Common myeloid progenitor, CD34-positive (primary cell): ENCODE measurements at regions of chr2 and their contacts with region 1.

Region 1: DNA sequence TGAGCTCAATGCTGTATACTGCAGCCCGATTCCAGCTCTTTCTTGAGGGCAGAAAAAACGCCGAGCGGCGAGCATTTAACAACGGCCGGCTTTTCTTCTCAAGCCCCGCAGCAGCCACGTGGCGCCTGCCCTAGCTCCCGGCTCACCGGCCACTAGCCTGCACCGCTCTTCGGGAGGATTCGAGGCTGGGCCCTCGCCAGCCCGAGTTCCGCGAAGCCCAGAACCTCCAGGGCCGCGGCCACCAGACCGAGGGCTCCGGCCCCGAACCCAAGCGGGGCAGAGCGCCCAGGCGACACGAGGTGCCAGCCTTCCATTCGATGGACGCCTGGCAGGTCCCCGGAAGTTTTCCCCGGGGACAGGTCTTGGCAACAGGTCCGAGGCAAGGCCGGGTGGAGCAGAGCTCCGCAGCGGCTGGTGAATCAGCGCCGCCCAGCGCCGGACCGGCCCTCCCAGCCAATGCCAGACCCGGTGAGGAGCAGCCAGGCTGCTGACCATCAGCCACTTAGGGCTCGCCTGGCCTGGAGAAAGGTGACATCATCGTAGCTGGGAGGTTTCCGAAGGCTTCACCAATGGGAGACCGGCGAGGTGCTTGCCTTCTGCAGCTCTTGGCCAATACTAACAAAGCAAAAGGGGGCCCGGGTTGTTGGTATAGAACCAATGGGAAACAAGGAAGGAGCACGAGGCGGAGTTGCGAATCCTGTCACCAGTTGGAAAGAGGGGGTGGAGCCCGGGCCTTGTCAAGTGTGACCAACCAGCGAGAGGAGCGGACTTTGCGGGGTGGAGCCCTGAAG is 544 bp upstream of the MXD1 start:
- DNase-seq: peak; percentile 100
- H3K4me3 ChIP-seq: peak overlapping the region; percentile 42 to 87 (median 78)
- H3K27ac ChIP-seq: peak overlapping the region; percentile 72 to 90
- H3K4me1 ChIP-seq: peaks cover 6 to 49% (median 32%) of the 10 kb centered on the region in 4 experiments
- H3K27me3 ChIP-seq: no peaks in the 10 kb centered on the region

Region 2: DNA sequence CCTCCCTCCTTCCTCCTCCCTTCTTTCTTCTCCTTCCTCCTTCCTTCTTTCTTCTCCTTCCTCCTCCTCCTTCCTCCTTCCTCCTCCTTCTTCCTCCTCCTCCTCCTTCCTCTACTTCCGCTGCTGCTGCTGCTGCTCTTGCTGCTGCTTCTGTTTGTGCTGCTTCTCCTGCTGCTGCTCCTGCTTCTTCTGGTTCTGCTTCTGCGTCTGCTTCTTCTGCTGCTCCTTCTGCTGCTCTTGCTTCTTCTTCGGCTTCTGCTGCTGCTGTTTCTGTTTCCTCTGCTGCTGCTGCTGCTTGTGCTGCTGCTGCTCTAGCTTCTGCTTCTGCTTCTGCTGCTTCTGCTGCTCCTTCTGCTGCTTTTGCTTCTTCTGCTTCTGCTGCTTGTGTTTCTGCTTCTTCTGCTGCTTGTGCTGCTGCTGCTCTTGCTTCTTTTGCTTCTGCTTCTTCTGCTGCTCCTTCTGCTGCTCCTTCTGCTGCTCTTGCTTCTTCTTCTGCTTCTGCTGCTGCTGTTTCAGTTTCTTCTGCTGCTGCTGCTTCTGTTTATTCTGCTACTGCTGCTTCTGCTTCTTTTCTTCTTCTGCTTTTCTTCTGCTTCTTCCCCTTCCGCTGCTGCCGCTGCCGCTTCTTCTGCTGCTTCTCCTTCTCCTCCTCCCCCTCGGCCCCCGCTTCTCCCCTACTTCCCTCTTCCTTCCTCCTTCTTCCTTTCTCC is 12.0 kb before region 1 on chr2:
- CTCF ChIA-PET with region 1: interaction called, 10 read pairs
- POLR2A ChIA-PET with region 1: no interaction called
- DNase-seq: peak; percentile 31 to 84 (median 76)
- H3K4me3 ChIP-seq: peak overlapping the region in 6 of 7 experiments; percentile 6 to 77 (median 57)
- H3K27ac ChIP-seq: peak overlapping the region in 1 of 2 experiments; percentile 32
- H3K4me1 ChIP-seq: peaks cover 5 to 23% (median 16%) of the 10 kb centered on the region in 4 experiments
- H3K27me3 ChIP-seq: no peaks in the 10 kb centered on the region

Region 3: DNA sequence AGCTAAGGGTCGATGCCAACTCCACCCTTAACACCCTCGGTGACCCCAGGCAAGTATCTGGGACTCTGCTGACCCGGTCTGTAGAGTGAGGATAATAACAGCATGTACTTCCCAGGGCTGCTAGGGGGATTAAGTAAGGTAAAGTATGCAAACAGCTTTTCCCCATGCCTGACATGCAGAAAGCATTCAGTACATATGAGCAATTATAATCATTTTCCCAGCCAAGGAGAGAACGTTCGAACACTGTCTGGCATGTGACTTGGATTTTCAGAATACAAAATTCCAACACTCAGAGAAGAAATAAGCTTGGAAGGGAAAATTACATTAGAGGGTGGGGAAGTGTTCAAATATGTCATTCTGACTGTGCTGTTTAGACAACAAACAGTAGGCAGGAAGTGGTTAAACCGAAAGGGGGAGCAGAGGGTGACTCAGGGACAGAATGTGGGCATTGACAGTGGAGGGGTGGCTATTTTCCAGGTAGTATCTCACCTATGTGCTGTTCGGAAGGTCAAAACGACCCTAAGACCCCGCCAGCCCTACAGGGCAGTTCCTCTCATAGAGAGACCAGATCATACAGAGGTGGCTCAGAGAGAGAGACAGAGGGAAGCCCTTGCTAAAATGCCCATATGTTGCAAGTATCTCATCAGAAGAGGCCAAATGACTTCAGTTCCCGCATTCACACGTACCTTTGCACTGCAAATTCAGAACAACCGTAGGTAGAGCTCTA is 32.1 kb after region 1 on chr2:
- CTCF ChIA-PET with region 1: interaction called, 10 read pairs
- POLR2A ChIA-PET with region 1: interaction called, 15 read pairs
- DNase-seq: peak; percentile 75 to 93 (median 92)
- H3K4me3 ChIP-seq: peak overlapping the region in 3 of 7 experiments; percentile 13 to 54 (median 41)
- H3K27ac ChIP-seq: peak overlapping the region; percentile 82 to 85
- H3K4me1 ChIP-seq: peaks cover 26 to 65% (median 59%) of the 10 kb centered on the region in 4 experiments
- H3K27me3 ChIP-seq: no peaks in the 10 kb centered on the region

Region 4: DNA sequence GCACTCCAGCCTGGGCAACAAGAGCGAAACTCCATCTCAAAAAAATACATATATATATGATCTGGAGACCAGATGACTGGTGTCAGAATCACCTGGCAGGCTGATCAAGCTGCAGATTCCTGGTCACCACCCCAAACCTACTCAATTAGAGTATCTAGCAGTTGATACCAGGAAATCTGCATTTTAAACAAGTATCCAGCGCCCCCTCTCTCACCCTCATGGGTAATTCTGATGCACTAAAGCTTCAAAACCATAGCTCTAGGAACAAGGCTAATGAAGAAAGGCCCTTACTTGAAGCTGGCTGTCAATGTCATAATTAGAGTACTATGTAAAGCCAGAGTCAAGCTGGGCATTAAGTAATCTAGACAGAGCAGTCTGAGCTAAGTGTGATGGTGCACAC is 147.9 kb after region 1 on chr2:
- CTCF ChIA-PET with region 1: interaction called, 96 read pairs
- POLR2A ChIA-PET with region 1: interaction called, 3 read pairs
- DNase-seq: no peak
- H3K4me3 ChIP-seq: no peak overlapping the region
- H3K27ac ChIP-seq: no peak overlapping the region
- H3K4me1 ChIP-seq: no peaks in the 10 kb centered on the region
- H3K27me3 ChIP-seq: no peaks in the 10 kb centered on the region

Region 5: GRCh38 chr2:70070541-70071268 is 156.3 kb after region 1 on chr2:
- CTCF ChIA-PET with region 1: interaction called, 96 read pairs
- POLR2A ChIA-PET with region 1: interaction called, 6 read pairs
- DNase-seq: peak; percentile 88 to 92 (median 92)
- H3K4me3 ChIP-seq: peak overlapping the region in 1 of 7 experiments; percentile 33
- H3K27ac ChIP-seq: no peak overlapping the region
- H3K4me1 ChIP-seq: peaks cover 4 to 19% (median 10%) of the 10 kb centered on the region in 4 experiments
- H3K27me3 ChIP-seq: no peaks in the 10 kb centered on the region

Region 6: DNA sequence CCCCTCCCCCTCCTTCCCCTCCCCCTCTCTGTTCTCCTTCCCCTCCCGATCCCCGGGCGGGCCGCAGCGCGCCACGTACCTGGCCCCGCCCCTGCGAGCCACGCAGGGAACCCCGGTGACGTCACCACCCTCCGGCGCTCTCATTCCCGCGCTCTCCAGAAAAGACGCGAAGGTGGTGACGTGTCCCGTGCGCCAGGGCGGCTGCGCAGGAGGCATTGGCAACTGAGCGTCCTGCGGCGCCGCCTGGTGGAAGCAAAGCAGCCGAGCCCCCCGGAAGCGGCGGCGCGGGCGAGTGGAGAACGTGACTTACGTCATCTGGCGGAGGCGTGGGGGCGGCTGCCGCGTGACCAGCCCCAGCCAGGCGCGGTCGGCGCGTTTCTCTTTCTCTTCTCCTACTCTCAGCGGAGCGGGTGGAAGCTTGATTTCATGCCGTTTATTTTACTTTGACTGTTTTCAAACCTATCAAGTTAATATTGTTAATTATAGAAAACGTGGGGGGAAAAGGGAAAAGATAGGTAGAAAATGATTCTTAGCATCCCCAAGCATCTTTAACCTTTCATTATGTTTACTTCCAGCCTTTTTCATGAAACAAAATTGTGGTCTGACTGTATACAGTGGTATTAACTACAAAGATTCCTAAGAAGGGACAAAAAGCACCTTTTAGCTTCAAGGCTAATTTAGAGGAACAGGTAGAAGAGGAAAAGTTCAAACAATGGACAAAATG is 228.4 kb after region 1 on chr2:
- CTCF ChIA-PET with region 1: interaction called, 18 read pairs
- POLR2A ChIA-PET with region 1: interaction called, 18 read pairs
- DNase-seq: peak; percentile 99 to 100 (median 99)
- H3K4me3 ChIP-seq: peak overlapping the region in 6 of 7 experiments; percentile 49 to 79 (median 68)
- H3K27ac ChIP-seq: peak overlapping the region; percentile 85 to 97
- H3K4me1 ChIP-seq: peaks cover 10 to 41% (median 26%) of the 10 kb centered on the region in 4 experiments
- H3K27me3 ChIP-seq: no peaks in the 10 kb centered on the region

Region 7: DNA sequence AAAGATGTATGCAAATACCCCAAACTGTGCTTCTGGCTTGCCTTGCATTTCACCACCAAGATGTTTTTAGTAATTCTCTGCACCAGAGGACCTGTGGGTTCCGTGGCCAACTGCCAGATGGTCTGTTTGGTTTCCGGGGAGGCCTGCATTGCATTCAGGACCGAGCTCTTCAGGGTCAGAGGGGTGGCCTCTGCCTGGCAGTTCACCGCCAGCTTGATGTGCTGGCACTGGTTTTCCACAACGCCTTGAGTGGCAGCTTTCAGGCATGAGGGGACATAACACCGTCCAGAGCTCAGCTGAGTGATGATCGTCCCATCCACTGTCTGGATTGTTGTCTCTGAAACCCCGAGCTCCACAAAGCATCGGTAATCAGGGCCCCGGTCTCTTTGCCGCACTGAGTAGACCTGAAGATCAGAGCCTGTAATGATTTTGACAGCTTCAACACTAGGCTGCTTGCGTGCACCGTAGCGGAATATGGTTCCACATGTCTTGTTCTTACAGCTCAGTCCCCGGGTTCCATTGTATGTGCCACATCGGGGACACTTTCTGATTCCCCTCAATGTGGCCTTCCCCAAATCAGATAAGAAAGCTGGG is 267.1 kb after region 1 on chr2:
- CTCF ChIA-PET with region 1: no interaction called
- POLR2A ChIA-PET with region 1: no interaction called
- DNase-seq: no peak
- H3K4me3 ChIP-seq: no peak overlapping the region
- H3K27ac ChIP-seq: no peak overlapping the region
- H3K4me1 ChIP-seq: no peaks in the 10 kb centered on the region
- H3K27me3 ChIP-seq: no peaks in the 10 kb centered on the region

Region 8: GRCh38 chr2:70301344-70302194 is 387.2 kb after region 1 on chr2 and contains the start of gene FAM136A:
- CTCF ChIA-PET with region 1: interaction called, 26 read pairs
- POLR2A ChIA-PET with region 1: no interaction called
- DNase-seq: peak; percentile 83 to 90 (median 89)
- H3K4me3 ChIP-seq: peak within 1 kb of the TSS; percentile 67 to 93 (median 79)
- H3K27ac ChIP-seq: peak within 1 kb of the TSS; percentile 33 to 65
- H3K4me1 ChIP-seq: peaks cover 0 to 13% (median 11%) of the 10 kb centered on the region in 4 experiments
- H3K27me3 ChIP-seq: no peaks in the 10 kb centered on the region